Common myeloid progenitor, CD34-positive (primary cell): ENCODE measurements at regions of chr5 and their contacts with region 1.

Region 1: DNA sequence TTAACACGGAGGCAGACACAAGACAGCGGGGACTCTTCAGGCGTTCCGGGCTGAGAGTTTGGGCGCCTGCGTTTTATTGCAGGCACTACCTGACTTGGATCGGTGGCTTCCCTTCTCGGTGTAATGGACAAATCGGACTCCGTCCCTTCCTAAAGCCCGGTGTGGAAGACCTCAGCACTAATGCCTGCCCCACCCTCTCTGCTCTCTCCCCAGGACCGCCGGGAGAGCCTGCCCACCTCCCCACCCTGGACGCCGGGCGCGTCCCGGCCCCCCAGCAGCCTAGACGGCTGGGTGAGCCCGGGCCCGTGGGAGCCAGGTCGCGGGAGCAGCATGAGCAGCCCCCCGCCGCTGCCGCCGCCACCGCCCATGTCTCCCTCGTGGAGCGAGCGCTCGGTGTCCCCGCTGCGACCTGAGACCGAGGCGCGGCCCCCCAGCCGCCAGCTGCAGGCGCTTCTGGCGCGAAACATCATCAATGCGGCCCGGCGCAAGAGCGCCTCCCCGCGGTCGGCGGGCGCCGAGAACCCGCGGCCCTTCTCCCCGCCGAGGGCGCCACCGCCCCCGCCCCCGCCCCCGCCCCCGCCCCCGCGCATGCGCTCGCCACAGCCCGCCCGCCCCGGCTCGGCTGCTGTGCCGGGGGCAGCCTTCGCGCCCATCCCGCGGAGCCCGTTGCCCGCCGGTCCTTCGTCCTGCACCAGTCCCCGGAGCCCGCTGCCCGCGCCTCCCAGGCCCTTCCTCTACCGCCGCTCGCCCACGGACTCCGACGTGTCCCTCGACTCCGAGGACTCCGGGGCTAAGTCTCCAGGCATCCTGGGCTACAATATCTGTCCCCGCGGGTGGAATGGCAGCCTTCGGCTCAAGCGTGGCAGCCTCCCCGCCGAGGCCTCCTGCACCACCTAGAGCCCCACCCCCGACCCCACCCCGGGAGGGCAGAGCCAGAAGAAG is 4.6 kb upstream of the MYOZ3 start:
- DNase-seq: peak; percentile 69 to 89 (median 86)
- H3K4me3 ChIP-seq: peak overlapping the region; percentile 41 to 84 (median 67)
- H3K27ac ChIP-seq: no peak overlapping the region
- H3K4me1 ChIP-seq: peaks cover 0 to 15% (median 12%) of the 10 kb centered on the region in 4 experiments
- H3K27me3 ChIP-seq: no peaks in the 10 kb centered on the region

Region 2: GRCh38 chr5:149711338-149711737 is 945.1 kb before region 1 on chr5:
- CTCF ChIA-PET with region 1: no interaction called
- POLR2A ChIA-PET with region 1: no interaction called
- DNase-seq: no peak
- H3K4me3 ChIP-seq: no peak overlapping the region
- H3K27ac ChIP-seq: no peak overlapping the region
- H3K4me1 ChIP-seq: no peaks in the 10 kb centered on the region
- H3K27me3 ChIP-seq: no peaks in the 10 kb centered on the region

Region 3: DNA sequence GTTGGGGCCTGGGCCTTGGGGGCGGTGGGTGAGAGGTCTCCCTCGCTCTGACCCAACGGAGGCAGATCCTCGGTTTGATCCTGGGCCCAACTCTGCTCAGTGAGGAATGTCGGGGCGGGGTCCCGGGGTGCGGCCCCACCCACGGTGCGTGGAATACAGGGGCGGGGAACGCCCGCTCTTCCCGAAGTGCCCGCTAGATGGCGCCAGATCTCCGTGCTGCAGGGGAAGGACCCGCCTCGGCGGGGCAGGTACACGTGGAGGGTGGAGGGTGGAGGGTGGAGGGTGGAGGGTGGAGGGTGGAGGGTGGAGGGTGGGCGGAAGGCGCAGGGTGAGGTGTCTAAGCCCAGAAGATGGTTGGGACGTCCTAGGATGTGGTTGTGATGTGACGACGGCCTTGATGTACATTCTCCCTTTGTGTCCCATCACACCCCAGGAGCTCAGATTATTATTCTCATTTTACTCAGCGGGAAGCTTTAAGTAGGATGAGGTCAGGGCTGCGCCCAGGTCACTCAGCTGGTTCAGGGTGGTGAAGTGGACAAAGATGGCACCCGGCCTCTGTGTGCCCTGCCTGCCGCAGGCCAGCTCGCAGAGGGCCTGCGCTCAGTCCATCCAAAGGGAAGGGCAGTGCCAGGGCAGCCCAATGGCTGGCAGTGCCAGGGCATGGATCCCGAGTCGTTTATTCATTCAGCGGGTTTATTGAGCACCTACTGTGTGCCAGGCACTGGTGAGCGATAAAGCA is 197.5 kb before region 1 on chr5:
- CTCF ChIA-PET with region 1: interaction called, 11 read pairs
- POLR2A ChIA-PET with region 1: no interaction called
- DNase-seq: peak; percentile 59 to 79 (median 74)
- H3K4me3 ChIP-seq: peak overlapping the region in 3 of 7 experiments; percentile 32 to 56 (median 54)
- H3K27ac ChIP-seq: no peak overlapping the region
- H3K4me1 ChIP-seq: peaks cover 14 to 82% (median 59%) of the 10 kb centered on the region in 4 experiments
- H3K27me3 ChIP-seq: no peaks in the 10 kb centered on the region

Region 4: GRCh38 chr5:150931368-150931965 is 275.0 kb after region 1 on chr5:
- CTCF ChIA-PET with region 1: no interaction called
- POLR2A ChIA-PET with region 1: no interaction called
- DNase-seq: no peak
- H3K4me3 ChIP-seq: no peak overlapping the region
- H3K27ac ChIP-seq: no peak overlapping the region
- H3K4me1 ChIP-seq: no peaks in the 10 kb centered on the region
- H3K27me3 ChIP-seq: no peaks in the 10 kb centered on the region